ENCODE measurements at regions of chr11 and their contacts with region 1.

Region 1: GRCh38 chr11:46593550-46594373 is at the start of gene AMBRA1:
- DNase-seq: peak; percentile 67 to 91 (median 76)
- ATAC-seq: peak; percentile 90
- H3K4me3 ChIP-seq: peak within 1 kb of the TSS; percentile 94
- H3K4me3 Mint-ChIP-seq: peak within 1 kb of the TSS; percentile 92
- H3K27ac ChIP-seq: peak within 1 kb of the TSS; percentile 42 to 55
- H3K27ac Mint-ChIP-seq: peak within 1 kb of the TSS; percentile 85
- H3K4me1 ChIP-seq: peaks cover 33% of the 10 kb centered on the region
- H3K4me1 Mint-ChIP-seq: peaks cover 43% of the 10 kb centered on the region
- H3K27me3 ChIP-seq: no peaks in the 10 kb centered on the region
- H3K27me3 Mint-ChIP-seq: no peaks in the 10 kb centered on the region
- CTCF ChIP-seq: no peak
- total RNA-seq, gene AMBRA1: 29.4 to 31.9 TPM

Region 2: DNA sequence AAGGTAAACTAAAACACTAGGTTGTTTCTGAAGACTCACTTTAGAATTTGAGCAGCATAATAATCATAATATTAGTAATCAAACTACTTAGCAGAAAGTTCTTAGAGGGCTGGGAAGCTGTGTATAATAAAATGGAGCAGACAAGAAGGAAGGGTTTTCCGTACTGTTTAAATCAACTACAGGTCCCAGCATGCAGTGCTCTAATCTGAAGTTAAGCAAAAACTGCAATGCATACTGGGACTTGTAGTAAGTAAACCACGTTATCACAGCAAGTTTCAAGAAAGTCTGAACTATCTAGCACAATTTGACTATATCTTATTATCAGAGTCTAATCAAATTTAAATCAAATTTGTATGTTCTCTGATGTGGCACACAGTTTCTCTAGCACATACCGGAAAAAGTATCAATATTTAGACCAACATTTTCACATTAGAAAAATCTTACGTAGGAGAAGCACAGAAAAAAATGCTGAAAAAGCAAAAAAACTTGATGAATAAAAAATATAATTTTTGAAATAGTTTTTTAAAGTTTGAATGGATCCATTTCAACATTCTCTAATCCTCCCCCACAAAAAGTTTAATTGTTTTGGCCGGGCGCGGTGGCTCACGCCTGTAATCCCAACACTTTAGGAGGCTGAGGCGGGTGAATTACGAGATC is 480.7 kb before region 1 on chr11:
- CTCF ChIA-PET with region 1: no interaction called
- POLR2A ChIA-PET with region 1: no interaction called
- intact Hi-C with region 1: loop called in 1 of 2 experiments (anchors 5 kb)
- DNase-seq: peak in 6 of 14 experiments; percentile 9 to 85 (median 58)
- ATAC-seq: peak; percentile 97
- H3K4me3 ChIP-seq: no peak overlapping the region
- H3K4me3 Mint-ChIP-seq: peak overlapping the region; percentile 72
- H3K27ac ChIP-seq: no peak overlapping the region
- H3K27ac Mint-ChIP-seq: peak overlapping the region; percentile 64
- H3K4me1 ChIP-seq: peaks cover 5% of the 10 kb centered on the region
- H3K4me1 Mint-ChIP-seq: peaks cover 53% of the 10 kb centered on the region
- H3K27me3 ChIP-seq: no peaks in the 10 kb centered on the region
- H3K27me3 Mint-ChIP-seq: no peaks in the 10 kb centered on the region
- CTCF ChIP-seq: no peak

Region 3: GRCh38 chr11:46560300-46560991 is 33.3 kb before region 1 on chr11:
- CTCF ChIA-PET with region 1: interaction called, 5 read pairs
- POLR2A ChIA-PET with region 1: interaction called, 31 read pairs
- intact Hi-C with region 1: no loop called
- DNase-seq: peak in 6 of 14 experiments; percentile 5 to 66 (median 38)
- ATAC-seq: peak; percentile 74
- H3K4me3 ChIP-seq: peak overlapping the region; percentile 59
- H3K4me3 Mint-ChIP-seq: peak overlapping the region; percentile 90
- H3K27ac ChIP-seq: peak overlapping the region; percentile 39 to 90
- H3K27ac Mint-ChIP-seq: peak overlapping the region; percentile 91
- H3K4me1 ChIP-seq: peaks cover 23% of the 10 kb centered on the region
- H3K4me1 Mint-ChIP-seq: peaks cover 69% of the 10 kb centered on the region
- H3K27me3 ChIP-seq: no peaks in the 10 kb centered on the region
- H3K27me3 Mint-ChIP-seq: no peaks in the 10 kb centered on the region
- CTCF ChIP-seq: no peak

Region 4: GRCh38 chr11:46639197-46639839 is 45.6 kb after region 1 on chr11:
- CTCF ChIA-PET with region 1: no interaction called
- POLR2A ChIA-PET with region 1: no interaction called
- intact Hi-C with region 1: no loop called
- DNase-seq: no peak
- ATAC-seq: no peak
- H3K4me3 ChIP-seq: no peak overlapping the region
- H3K4me3 Mint-ChIP-seq: no peak overlapping the region
- H3K27ac ChIP-seq: no peak overlapping the region
- H3K27ac Mint-ChIP-seq: no peak overlapping the region
- H3K4me1 ChIP-seq: peaks cover 4% of the 10 kb centered on the region
- H3K4me1 Mint-ChIP-seq: peaks cover 25% of the 10 kb centered on the region
- H3K27me3 ChIP-seq: no peaks in the 10 kb centered on the region
- H3K27me3 Mint-ChIP-seq: no peaks in the 10 kb centered on the region
- CTCF ChIP-seq: no peak

Measured in CD4-positive, alpha-beta T cell (primary cell).